HEK293T (cell line): ENCODE measurements at regions of chr1 and their contacts with region 1.

Region 1: GRCh38 chr1:155001675-155002463 is 733 bp upstream of the ZBTB7B start:
- DNase-seq: peak; percentile 99

Region 2: GRCh38 chr1:154936555-154937084 is 65.2 kb before region 1 on chr1 and contains the start of gene PMVK:
- CTCF ChIA-PET with region 1: no interaction called
- POLR2A ChIA-PET with region 1: interaction called, 18 read pairs
- DNase-seq: peak; percentile 96

Region 3: DNA sequence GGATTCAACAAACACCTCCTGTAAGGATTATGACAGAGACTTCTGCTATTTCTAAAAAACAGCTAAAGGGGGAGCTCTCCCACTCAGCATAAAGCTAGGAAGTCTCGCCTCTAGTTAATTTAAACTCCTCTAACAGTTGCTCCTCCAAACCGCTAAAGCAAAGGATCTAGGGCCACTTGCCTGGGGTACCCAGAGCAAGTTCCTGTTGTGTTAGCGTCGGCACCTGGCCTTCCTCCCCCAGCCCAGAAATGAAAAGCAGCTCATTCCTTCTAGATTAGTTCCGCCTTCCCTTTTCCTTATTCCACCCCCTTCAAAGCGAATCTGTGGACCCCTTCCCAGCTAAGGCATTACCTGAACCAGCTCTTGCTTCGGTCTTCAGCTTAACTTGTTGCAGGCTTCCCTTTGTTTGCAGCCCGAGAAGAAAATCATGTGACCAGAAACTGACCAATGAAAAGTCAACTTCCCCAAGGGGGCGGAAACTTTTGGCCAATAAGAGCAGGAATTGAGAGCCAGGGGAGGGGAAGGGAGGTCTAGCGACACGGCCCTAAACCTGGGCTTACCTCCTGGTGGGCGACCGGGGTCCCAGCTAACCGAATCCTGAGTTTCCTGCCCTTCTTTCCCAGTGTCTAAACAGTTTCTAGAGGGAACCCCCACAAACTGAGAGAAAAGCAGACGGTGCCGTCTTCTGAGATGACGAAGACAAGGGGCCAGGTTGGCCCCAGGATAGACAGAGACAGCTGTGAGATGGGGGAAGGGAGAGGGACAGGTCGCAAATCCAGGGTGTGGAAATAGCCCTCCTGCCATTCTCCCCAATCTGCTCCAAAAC is 45.9 kb before region 1 on chr1 and contains the start of gene PBXIP1:
- CTCF ChIA-PET with region 1: interaction called, 12 read pairs
- POLR2A ChIA-PET with region 1: interaction called, 21 read pairs
- DNase-seq: peak; percentile 95

Region 4: DNA sequence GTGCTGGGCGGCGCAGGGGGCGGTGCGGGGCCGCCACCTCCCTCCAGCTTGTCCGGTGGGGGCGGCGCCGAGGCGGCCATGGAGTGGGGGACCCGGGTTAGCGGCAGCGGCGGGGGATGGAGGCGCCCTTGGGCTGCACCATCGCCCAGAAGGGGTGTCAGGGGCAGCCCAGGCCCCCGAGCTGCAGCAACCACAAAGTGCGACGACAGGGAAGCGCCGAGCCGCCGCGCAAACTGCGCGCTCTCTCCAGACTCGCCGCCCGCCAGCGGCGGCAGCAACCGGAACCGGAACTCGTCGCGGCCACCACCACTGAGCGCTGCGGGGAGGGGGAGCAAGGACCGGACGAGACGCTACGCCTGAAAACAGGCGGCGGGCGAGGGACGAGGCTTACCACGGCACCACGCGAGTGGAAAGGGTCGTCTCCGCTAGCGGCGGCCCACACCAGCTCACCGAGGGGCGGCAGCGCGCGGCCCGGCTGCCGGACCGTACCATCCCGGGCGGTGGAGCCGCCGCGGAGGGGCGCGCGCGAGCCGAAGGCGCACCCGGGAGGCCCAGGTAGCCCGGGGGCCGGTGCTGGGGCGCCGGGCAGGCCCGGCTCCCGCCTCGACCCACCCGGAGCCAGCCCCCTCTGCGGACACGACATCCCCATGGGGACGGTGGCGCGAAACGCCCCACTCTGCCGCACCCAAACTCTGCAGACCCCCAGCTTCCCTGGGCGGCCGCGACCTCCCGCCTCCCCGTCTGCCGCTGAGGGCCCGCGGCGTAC is 40.2 kb before region 1 on chr1 and contains the start of gene PYGO2:
- CTCF ChIA-PET with region 1: interaction called, 12 read pairs
- POLR2A ChIA-PET with region 1: interaction called, 21 read pairs
- DNase-seq: peak; percentile 87

Region 5: DNA sequence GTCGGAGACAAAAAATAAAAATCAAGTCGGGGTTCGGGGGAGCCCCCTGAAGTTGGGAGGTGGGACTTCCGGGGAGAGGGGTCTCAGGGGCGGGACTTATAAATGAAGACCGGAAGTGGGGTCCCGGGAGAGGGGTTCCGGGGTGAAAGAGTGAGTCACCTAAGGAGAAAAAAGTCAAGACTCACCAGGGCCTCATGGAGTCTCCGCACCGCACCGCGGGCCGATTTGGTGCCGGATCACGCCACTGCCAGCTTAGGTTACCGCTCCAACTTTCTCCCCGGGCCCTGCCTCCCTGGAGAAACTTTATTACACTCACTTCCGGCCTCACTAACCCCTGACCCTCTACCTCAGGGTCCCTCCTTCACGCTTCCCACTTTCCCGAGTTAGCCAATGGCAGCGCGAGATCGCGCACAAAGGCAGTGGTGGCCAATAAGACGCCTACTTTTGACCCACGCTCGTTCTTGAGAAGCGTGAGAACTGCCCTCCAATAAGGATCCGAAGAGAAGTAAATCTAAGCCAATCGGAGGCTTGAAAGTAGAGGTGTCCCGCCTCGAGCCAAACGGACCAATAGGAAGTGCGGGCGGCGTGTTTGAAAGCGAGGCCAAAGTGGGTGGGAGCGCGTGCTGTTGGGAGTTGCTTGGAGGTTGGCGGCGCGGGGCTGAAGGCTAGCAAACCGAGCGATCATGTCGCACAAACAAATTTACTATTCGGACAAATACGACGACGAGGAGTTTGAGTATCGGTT is 27.6 kb before region 1 on chr1 and contains the start of gene CKS1B:
- CTCF ChIA-PET with region 1: interaction called, 8 read pairs
- POLR2A ChIA-PET with region 1: interaction called, 17 read pairs
- DNase-seq: peak; percentile 94

Region 6: DNA sequence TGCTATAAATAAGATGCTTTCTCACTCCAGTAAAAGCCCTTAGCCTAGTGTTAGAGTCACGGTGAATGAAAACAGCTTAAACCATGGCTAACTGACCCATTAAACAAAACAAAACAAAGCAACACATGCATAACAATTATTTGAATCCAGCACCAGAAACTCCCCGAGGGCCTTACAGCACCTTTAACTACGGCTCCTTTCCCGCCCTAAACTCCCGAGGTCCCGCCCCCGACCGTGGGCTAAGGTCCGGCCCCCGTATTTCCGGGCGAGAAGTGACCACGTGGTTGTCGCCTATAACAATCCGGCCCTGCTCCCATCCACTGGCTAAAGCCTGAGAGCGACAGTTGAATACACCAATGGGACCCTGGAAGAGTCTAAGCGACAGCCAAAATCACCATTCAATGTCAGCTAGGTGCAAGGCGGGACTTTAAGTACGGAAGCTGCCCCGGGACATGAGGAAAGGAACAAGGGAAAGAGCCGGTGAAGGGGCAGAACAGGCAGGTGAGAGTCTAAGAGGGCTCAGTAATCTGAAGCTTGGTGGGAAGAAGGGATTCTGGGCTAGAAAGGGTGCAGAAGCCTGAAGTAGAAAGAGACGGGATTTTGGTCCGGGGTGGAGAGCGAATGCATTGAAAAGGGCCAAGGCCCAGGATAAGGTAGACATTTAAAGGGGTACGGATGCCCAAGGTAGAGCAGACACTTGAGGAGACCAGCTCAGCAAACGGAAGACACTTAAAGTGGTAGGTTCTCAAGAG is 18.8 kb before region 1 on chr1 and contains the start of gene FLAD1:
- CTCF ChIA-PET with region 1: interaction called, 26 read pairs
- POLR2A ChIA-PET with region 1: interaction called, 35 read pairs
- DNase-seq: peak; percentile 99

Region 7: GRCh38 chr1:155017041-155017945 is 15.4 kb after region 1 on chr1:
- CTCF ChIA-PET with region 1: interaction called, 45 read pairs
- POLR2A ChIA-PET with region 1: interaction called, 43 read pairs
- DNase-seq: peak; percentile 93

Region 8: GRCh38 chr1:155339515-155340097 is 337.7 kb after region 1 on chr1:
- CTCF ChIA-PET with region 1: no interaction called
- POLR2A ChIA-PET with region 1: no interaction called
- DNase-seq: no peak